Activated B cell treated with CpG ODN at 0.5 μM for 24 hours (primary cell): ENCODE measurements at regions of chr2 and their contacts with region 1.

Region 1: GRCh38 chr2:48946449-48947048 is 191.0 kb upstream of the LHCGR start:
- DNase-seq: no peak
- ATAC-seq: peak; percentile 79
- H3K4me3 Mint-ChIP-seq: no peak overlapping the region
- H3K27ac Mint-ChIP-seq: no peak overlapping the region
- H3K4me1 Mint-ChIP-seq: no peaks in the 10 kb centered on the region
- H3K27me3 Mint-ChIP-seq: peaks cover 2% of the 10 kb centered on the region
- CTCF ChIP-seq: no peak

Region 2: DNA sequence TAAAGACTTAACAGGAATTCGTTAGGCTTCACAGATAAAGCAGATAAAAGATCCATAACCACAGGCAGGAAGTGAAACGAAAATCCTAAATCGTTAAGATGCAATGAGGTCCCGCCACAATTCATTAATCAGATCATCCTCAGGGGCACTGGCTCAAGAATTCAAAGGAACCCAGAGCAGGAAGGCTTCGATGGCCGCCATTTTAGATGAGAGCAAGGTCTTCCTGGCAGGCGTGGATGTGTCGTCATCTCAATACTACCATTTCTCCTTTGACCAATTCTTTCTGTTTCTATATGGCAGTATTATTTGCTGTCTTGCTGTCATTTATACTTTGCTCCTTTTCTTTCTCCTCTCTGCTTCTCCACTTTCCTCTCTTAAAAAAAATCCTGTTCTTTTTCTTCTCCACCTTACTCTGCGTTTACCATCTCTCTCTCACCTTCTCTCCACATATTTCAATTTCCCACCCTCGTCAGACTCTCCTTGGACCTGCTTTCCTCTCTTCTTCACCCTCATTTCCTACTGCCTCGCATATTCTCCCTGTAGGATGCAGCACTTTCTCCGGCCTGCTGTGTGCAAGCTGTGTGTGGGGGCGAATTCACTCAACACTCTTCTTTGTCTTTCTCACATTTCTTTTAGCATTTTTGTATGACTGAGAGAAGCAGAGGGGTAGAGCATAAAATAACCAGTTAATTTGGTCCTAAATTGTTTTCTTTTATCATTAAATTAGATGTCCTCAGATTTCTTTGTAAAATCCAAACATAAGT is 156.0 kb before region 1 on chr2:
- CTCF ChIA-PET with region 1: no interaction called
- POLR2A ChIA-PET with region 1: no interaction called
- intact Hi-C with region 1: no loop called
- DNase-seq: no peak
- ATAC-seq: no peak
- H3K4me3 Mint-ChIP-seq: no peak overlapping the region
- H3K27ac Mint-ChIP-seq: no peak overlapping the region
- H3K4me1 Mint-ChIP-seq: no peaks in the 10 kb centered on the region
- H3K27me3 Mint-ChIP-seq: peaks cover 2% of the 10 kb centered on the region
- CTCF ChIP-seq: no peak

Region 3: DNA sequence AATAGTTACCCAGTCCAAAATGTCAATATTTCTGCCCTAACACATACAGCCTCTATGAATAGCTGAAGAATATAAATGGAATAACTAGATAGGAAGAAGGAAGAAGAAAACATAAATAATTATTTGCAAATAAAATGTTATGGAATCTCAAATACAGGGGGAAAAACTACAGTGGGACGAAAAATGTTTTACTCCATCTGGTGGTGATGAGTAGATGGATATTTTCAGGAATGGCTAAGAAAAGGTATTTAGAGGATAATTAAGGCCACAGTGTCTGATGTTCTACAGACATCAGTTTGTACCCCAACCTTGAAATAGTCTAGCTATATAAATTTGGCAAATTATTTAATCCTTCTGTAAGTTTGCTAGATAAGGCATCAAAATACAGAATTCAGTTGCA is 385.9 kb after region 1 on chr2:
- CTCF ChIA-PET with region 1: no interaction called
- POLR2A ChIA-PET with region 1: no interaction called
- intact Hi-C with region 1: loop called (anchors 1 kb)
- DNase-seq: no peak
- ATAC-seq: no peak
- H3K4me3 Mint-ChIP-seq: no peak overlapping the region
- H3K27ac Mint-ChIP-seq: no peak overlapping the region
- H3K4me1 Mint-ChIP-seq: no peaks in the 10 kb centered on the region
- H3K27me3 Mint-ChIP-seq: no peaks in the 10 kb centered on the region
- CTCF ChIP-seq: no peak

Region 4: GRCh38 chr2:50143822-50144575 is 1197.5 kb after region 1 on chr2:
- CTCF ChIA-PET with region 1: interaction called, 11 read pairs
- POLR2A ChIA-PET with region 1: no interaction called
- intact Hi-C with region 1: no loop called
- DNase-seq: no peak
- ATAC-seq: no peak
- H3K4me3 Mint-ChIP-seq: peak overlapping the region; percentile 68
- H3K27ac Mint-ChIP-seq: no peak overlapping the region
- H3K4me1 Mint-ChIP-seq: peaks cover 5% of the 10 kb centered on the region
- H3K27me3 Mint-ChIP-seq: no peaks in the 10 kb centered on the region
- CTCF ChIP-seq: no peak

Region 5: GRCh38 chr2:50401772-50402653 is 1455.5 kb after region 1 on chr2:
- CTCF ChIA-PET with region 1: interaction called, 12 read pairs
- POLR2A ChIA-PET with region 1: no interaction called
- intact Hi-C with region 1: no loop called
- DNase-seq: no peak
- ATAC-seq: no peak
- H3K4me3 Mint-ChIP-seq: no peak overlapping the region
- H3K27ac Mint-ChIP-seq: no peak overlapping the region
- H3K4me1 Mint-ChIP-seq: no peaks in the 10 kb centered on the region
- H3K27me3 Mint-ChIP-seq: no peaks in the 10 kb centered on the region
- CTCF ChIP-seq: no peak

Region 6: GRCh38 chr2:50492477-50492851 is 1545.9 kb after region 1 on chr2:
- CTCF ChIA-PET with region 1: interaction called, 19 read pairs
- POLR2A ChIA-PET with region 1: no interaction called
- intact Hi-C with region 1: no loop called
- DNase-seq: no peak
- ATAC-seq: peak; percentile 75
- H3K4me3 Mint-ChIP-seq: no peak overlapping the region
- H3K27ac Mint-ChIP-seq: no peak overlapping the region
- H3K4me1 Mint-ChIP-seq: peaks cover 9% of the 10 kb centered on the region
- H3K27me3 Mint-ChIP-seq: no peaks in the 10 kb centered on the region
- CTCF ChIP-seq: peak; percentile 28